ENCODE measurements at regions of chr14 and their contacts with region 1.

Region 1: DNA sequence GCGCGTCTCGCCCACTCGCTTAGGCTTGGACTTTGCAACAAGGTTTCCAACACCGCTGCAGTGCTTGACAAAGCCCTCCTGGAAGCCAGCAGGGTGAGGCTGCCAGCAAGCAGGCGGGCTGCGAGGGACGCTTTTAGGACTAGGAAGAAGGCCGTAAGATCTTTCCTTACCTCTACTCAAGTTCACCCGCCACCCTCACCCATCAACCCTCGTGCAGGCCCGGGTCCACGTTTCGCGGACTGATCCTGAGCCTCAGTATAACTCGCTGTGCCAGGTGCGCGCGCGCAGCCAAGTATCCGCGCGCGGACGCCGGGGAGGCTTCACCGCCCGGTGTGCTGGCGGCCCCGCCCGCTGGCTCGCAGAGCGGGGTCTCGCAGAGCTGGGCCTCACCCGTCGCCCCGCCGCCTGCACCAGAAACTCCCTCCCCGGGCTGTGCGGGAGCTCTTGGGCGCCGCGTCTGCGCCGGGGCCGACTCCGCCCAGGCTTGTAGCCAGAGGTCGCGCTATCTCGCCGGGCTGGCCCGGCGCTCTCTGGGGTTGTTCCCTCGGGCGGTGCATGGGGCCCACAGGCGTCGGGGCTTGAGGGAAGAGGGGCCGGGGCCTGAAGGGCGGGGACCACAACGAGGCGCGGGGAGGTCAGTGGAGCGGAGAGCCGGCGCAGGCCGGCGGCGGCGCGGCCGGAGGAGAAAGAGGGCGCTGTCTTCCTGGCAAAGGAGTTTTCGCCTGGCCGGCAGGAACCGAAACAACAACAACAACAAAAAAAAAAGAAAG is 7.6 kb upstream of the SIX1 start:
- DNase-seq: peak; percentile 74
- ATAC-seq: peak; percentile 82

Region 2: GRCh38 chr14:60724137-60724619 is 67.3 kb after region 1 on chr14 and contains the start of gene SIX4:
- intact Hi-C with region 1: loop called (anchors 10 kb)
- DNase-seq: peak; percentile 66
- ATAC-seq: peak; percentile 84
- total RNA-seq, gene SIX4: 2.2 TPM

Measured in sciatic nerve (tissue), 2 donors.